ENCODE measurements at regions of chr3 and their contacts with region 1.

Region 1: GRCh38 chr3:43001094-43001553 is 22.0 kb downstream of the GASK1A start:
- DNase-seq: peak; percentile 85
- ATAC-seq: peak; percentile 83
- H3K4me3 ChIP-seq: no peak overlapping the region
- H3K27ac ChIP-seq: peak overlapping the region; percentile 67; the same call in 1 of the 2 replicates
- H3K4me1 ChIP-seq: peaks cover 6% of the 10 kb centered on the region; the same call in 1 of the 2 replicates
- H3K27me3 ChIP-seq: no peaks in the 10 kb centered on the region; the same call in 1 of the 2 replicates
- CTCF ChIP-seq: no peak
- POLR2A ChIP-seq: no peak
- RAD21 ChIP-seq: no peak

Region 2: DNA sequence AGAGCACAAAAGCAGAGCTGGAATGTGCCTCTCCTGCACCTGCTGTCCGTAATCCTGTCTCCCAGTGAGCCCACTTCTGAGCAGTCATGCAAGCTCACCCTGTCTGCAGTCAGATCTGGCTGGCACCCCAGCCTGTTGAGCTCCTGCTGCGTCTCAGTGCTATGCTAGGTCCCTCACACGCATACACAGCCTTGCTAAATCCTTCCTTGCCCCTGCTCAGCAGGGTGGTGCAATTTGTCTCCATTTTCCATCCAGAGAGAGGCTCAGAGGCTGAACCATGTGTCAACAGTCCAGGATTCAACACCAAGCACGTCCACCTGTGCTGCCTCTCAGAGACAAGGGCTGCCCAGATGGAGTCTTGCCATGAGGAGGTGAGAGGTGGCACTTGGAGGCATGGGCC is 93.7 kb after region 1 on chr3:
- CTCF ChIA-PET with region 1: no interaction called
- POLR2A ChIA-PET with region 1: no interaction called
- dilution Hi-C with region 1: no loop called
- in situ Hi-C with region 1: no loop called
- intact Hi-C with region 1: loop called (anchors 5 kb)
- DNase-seq: no peak
- ATAC-seq: no peak
- H3K4me3 ChIP-seq: no peak overlapping the region
- H3K27ac ChIP-seq: no peak overlapping the region
- H3K4me1 ChIP-seq: no peaks in the 10 kb centered on the region; the same call in 1 of the 2 replicates
- H3K27me3 ChIP-seq: no peaks in the 10 kb centered on the region
- CTCF ChIP-seq: no peak
- POLR2A ChIP-seq: no peak
- RAD21 ChIP-seq: no peak